ENCODE measurements at regions of chr10 and their contacts with region 1.

Region 1: DNA sequence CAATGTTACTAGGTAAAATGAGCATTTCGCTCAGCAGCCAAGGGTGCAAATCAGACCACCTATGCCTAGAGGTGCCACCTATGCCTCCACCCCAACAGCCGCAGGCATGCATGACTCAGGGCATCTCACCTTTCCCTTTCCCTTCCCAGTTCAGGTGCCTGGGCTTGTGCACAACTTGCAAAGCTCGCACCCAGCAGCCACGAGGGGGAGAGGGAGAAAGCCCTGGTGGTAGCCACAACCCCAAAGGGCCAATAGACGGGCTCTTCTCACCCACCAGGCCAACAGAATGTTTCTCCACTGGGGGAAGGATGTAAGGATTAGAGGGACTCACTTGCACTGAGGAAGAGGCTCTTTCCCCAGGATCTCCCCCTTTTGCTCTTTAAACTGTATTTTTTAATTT is 462.3 kb upstream of the PCDH15 start:
- DNase-seq: no peak
- H3K4me3 ChIP-seq: no peak overlapping the region
- H3K27ac ChIP-seq: no peak overlapping the region
- H3K4me1 ChIP-seq: no peaks in the 10 kb centered on the region
- H3K27me3 ChIP-seq: peaks cover 2% of the 10 kb centered on the region
- CTCF ChIP-seq: no peak

Region 2: DNA sequence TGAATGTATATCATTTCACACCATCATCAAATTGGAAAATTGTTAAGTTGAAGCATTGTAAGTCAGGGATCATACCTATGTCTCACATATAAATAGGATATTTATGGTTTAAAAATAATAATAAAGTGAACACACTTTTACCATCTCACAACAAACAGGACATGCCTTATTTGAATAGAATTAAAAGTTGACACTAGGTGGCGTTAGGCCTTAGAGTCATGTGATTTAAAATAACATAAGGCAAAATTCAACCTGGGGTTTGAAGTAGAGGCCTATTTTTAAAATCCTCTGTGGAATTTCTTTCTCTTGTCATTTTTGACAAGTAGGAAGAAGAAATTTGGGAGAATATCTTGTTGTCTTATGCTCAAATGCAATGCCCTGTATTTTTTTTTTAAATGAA is 277.6 kb before region 1 on chr10:
- CTCF ChIA-PET with region 1: no interaction called
- dilution Hi-C with region 1: no loop called
- in situ Hi-C with region 1: no loop called
- intact Hi-C with region 1: loop called (anchors 2 kb)
- DNase-seq: peak; percentile 4
- H3K4me3 ChIP-seq: no peak overlapping the region
- H3K27ac ChIP-seq: no peak overlapping the region
- H3K4me1 ChIP-seq: no peaks in the 10 kb centered on the region
- H3K27me3 ChIP-seq: no peaks in the 10 kb centered on the region
- CTCF ChIP-seq: peak; percentile 34 to 50